Activated CD4-positive, alpha-beta T cell treated with anti-CD3 and anti-CD28 coated beads for 36 hours (primary cell): ENCODE measurements at regions of chr3 and their contacts with region 1.

Region 1: GRCh38 chr3:108388136-108389132 is 92.1 kb downstream of the HHLA2 start:
- DNase-seq: peak; percentile 29
- ATAC-seq: peak; percentile 90
- H3K4me3 Mint-ChIP-seq: no peak overlapping the region
- H3K27ac Mint-ChIP-seq: peak overlapping the region; percentile 8
- H3K4me1 Mint-ChIP-seq: peaks cover 25% of the 10 kb centered on the region
- H3K27me3 Mint-ChIP-seq: peaks cover 15% of the 10 kb centered on the region

Region 2: DNA sequence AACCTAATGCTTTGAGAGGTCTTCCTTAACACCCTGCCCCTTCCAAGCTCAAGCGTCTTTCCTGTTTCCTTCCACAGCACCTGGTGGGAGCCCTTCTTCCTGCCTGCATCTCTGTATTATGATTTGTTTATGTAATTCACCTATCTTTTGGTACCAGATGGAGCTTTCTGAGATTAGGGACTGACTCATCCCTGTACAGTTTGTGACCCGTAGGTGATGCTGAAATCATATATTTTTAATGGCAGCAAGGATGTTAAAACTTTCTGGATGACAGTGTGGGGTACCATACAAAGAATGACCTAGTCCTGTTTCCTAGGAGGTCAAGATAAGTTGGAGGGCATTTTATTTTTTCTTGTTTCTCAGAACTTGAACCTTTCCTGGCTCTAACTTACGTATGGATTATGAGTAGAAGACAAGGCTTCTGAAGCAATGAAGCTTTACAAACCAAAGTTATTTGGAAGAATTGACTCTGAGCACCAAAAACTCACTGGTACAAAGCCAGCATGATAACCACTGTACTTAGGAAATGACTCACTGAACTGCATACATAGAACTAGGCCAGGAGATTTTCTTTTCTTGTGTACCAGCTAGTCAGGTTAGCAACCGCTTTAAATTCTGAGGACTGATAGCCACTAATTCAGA is 45.5 kb before region 1 on chr3:
- CTCF ChIA-PET with region 1: no interaction called
- POLR2A ChIA-PET with region 1: no interaction called
- intact Hi-C with region 1: loop called in 1 of 2 experiments (anchors 5 kb)
- DNase-seq: no peak
- ATAC-seq: peak; percentile 92
- H3K4me3 Mint-ChIP-seq: no peak overlapping the region
- H3K27ac Mint-ChIP-seq: peak overlapping the region; percentile 5
- H3K4me1 Mint-ChIP-seq: peaks cover 17% of the 10 kb centered on the region
- H3K27me3 Mint-ChIP-seq: peaks cover 5% of the 10 kb centered on the region